ENCODE measurements at regions of chr2 and their contacts with region 1.

Region 1: DNA sequence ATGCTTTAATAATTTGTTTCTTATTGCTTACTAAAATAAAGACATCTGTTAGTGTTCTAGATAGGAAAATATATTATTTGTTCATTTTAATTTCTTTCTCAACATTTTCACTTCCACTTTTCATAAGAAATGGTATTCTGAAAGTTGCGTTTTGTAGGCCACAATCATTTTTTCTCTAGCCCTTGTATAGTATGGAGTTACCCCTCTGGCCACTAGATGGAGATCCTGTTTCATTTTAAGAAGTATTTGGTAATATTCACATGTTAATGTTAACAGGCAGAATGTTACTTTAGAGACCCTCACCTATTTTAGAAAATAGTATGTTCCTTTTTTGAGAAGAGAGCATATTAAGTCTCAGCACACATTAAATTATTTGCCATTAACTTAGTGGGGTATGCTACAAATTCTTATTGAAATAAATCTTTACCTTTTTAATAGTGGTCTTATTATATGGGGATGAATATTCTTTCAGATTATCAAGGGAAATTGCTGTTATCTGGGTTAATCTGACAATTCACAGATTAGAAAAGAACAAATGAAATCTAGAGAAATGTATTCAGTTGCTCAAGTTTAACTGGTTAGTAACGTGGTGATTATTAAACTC is 73.9 kb upstream of the TTC27 start:
- DNase-seq: no peak
- ATAC-seq: peak in 6 of 8 donors; percentile 58 to 75 (median 70)
- H3K4me3 ChIP-seq: no peak overlapping the region
- H3K27ac ChIP-seq: no peak overlapping the region
- H3K4me1 ChIP-seq: peaks cover 0 to 12% (median 2%) of the 10 kb centered on the region in 9 donors
- H3K27me3 ChIP-seq: no peaks in the 10 kb centered on the region
- CTCF ChIP-seq: peak; percentile 40 to 83 (median 76)

Region 2: DNA sequence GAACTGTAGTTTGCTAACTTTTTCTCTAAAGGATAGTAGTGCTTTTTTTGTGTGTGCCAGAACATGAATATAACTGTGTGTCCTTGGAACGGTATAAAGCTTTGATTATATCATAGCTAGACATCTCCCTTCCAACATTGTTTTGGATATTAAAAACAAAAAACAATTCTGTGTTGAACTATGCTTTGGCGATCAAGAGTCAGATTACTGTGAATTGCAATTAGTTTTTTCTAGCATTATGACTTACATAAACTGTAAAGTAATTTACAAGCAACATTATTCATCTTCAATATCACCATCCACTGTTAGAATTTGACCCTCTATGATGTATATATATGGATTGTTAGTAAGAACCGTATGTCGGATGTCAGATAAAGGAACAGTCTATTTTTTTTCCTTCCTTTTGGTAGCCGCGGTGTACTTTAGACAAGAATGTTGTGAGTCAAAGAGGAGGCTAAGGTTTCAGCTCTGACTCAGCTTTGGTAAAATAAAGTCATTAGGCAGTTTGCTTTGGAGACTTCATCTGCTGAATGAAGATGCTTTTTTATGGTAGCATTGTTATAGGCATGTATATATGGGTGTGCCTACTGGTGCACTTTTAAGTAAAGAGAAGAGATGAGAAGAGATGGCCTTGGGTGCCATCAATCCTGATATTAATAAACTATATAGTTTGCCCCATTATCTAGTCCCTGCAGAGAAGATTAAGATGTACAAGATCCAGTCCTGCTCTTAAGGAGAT is 469.2 kb after region 1 on chr2:
- intact Hi-C with region 1: loop called in 1 of 10 experiments (anchors 10 kb)
- DNase-seq: no peak
- ATAC-seq: peak in 5 of 8 donors; percentile 15 to 65 (median 32)
- H3K4me3 ChIP-seq: no peak overlapping the region
- H3K27ac ChIP-seq: peak overlapping the region in 8 of 10 donors; percentile 16 to 73 (median 60)
- H3K4me1 ChIP-seq: peaks cover 0 to 42% (median 26%) of the 10 kb centered on the region in 9 donors
- H3K27me3 ChIP-seq: no peaks in the 10 kb centered on the region
- CTCF ChIP-seq: no peak

Region 3: GRCh38 chr2:33583194-33583938 is 1029.4 kb after region 1 on chr2:
- intact Hi-C with region 1: loop called in 2 of 10 experiments (anchors 10 kb)
- DNase-seq: peak in 1 of 2 donors; percentile 27
- ATAC-seq: peak in 4 of 8 donors; percentile 41 to 67 (median 50)
- H3K4me3 ChIP-seq: no peak overlapping the region
- H3K27ac ChIP-seq: peak overlapping the region in 2 of 10 donors; percentile 3 to 32
- H3K4me1 ChIP-seq: peaks cover 0 to 27% (median 13%) of the 10 kb centered on the region in 9 donors
- H3K27me3 ChIP-seq: no peaks in the 10 kb centered on the region
- CTCF ChIP-seq: peak; percentile 73 to 89 (median 81)

Measured in heart right ventricle (tissue), 16 donors.